MCF 10A (cell line): ENCODE measurements at regions of chr9 and their contacts with region 1.

Region 1: DNA sequence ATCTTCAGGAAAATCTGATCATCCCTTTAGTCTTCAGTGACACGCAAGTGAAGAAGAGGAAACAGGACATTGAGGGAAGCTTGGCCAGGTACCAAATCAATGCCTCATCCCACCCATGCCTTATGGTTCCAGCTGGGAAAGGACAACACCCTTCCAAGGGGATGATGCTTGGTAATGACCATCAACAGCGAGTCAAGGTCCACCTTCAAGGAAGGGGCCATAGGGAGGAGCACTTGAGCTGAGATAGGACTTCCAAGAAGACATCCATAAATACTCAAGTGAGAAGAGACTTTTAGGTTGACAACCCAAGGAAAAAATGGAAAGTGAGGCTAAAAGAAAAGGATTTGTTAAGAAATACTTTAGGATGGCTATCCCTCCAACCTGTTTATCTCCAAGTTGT is 27.1 kb upstream of the GAS1 start:
- DNase-seq: no peak
- H3K4me3 Mint-ChIP-seq: no peak overlapping the region
- H3K27ac Mint-ChIP-seq: no peak overlapping the region
- H3K4me1 Mint-ChIP-seq: peaks cover 27% of the 10 kb centered on the region
- H3K27me3 Mint-ChIP-seq: no peaks in the 10 kb centered on the region
- CTCF ChIP-seq: no peak

Region 2: DNA sequence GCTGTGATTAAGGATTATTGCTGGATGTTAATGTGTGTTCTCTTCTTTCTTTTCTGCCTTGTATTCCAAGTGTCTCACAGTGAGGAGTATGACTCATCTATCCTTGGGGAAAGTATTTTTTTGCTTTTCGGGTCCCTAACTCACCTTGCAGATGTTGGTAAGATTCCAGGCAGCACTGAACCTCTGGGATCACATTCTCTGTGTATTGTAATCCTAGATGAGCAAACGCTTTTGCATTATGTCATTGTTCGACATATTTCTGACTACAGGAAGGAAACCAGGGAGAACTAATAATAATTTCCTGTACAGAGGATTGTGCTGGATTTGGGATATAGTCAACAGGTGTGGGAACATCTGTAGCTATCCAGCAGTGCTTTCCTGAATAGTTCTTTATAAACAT is 374.1 kb before region 1 on chr9:
- CTCF ChIA-PET with region 1: no interaction called
- POLR2A ChIA-PET with region 1: no interaction called
- intact Hi-C with region 1: no loop called
- DNase-seq: peak; percentile 75
- H3K4me3 Mint-ChIP-seq: no peak overlapping the region
- H3K27ac Mint-ChIP-seq: no peak overlapping the region
- H3K4me1 Mint-ChIP-seq: peaks cover 16% of the 10 kb centered on the region
- H3K27me3 Mint-ChIP-seq: no peaks in the 10 kb centered on the region
- CTCF ChIP-seq: no peak

Region 3: DNA sequence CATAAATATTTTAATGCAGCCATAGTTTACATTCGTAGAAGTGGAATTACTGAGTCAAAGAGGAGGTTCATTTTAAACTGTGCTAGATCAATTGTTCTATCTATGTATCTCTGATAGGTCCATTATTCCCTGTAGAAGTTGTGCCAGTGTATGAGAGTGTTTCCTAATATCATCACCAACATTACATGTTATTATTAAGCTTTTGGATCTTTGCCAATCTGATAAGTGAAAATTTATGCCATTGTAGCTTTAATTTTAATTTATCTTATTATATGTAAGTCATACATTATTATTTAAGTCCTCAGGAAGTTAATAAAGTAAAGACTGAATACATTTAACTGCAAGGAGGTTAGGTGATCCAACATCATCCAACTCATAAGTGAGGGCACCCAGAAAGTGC is 16.2 kb before region 1 on chr9:
- CTCF ChIA-PET with region 1: no interaction called
- POLR2A ChIA-PET with region 1: interaction called, 14 read pairs
- intact Hi-C with region 1: no loop called
- DNase-seq: no peak
- H3K4me3 Mint-ChIP-seq: no peak overlapping the region
- H3K27ac Mint-ChIP-seq: no peak overlapping the region
- H3K4me1 Mint-ChIP-seq: peaks cover 12% of the 10 kb centered on the region
- H3K27me3 Mint-ChIP-seq: no peaks in the 10 kb centered on the region
- CTCF ChIP-seq: no peak